ENCODE measurements at regions of chr4 and their contacts with region 1.

Region 1: GRCh38 chr4:169612871-169613859 is 782 bp upstream of the NEK1 start:
- DNase-seq: peak; percentile 81
- H3K4me3 Mint-ChIP-seq: peak overlapping the region; percentile 98
- H3K27ac Mint-ChIP-seq: peak overlapping the region; percentile 98
- H3K4me1 Mint-ChIP-seq: peaks cover 12% of the 10 kb centered on the region
- H3K27me3 Mint-ChIP-seq: no peaks in the 10 kb centered on the region
- CTCF ChIP-seq: peak; percentile 56

Region 2: DNA sequence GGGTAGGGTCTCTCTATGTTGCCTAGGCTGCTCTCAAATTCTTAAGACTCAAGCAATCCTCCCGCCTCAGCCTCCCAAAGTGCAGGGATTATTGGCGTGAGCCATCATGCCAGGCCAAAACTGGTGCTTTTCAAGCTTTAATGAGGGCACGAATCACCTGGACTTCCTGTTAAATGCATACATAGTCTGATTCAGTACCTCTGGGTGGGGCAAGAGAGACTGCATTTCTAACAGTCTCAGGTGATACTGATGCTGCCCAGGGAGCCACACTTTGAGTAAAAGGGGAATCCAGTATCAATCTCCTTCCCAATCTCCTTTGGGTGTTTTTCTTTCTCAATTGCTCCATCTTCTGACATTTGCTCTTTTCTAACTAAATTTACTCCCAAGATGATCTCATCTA is 438.9 kb before region 1 on chr4:
- CTCF ChIA-PET with region 1: no interaction called
- POLR2A ChIA-PET with region 1: no interaction called
- intact Hi-C with region 1: no loop called
- DNase-seq: no peak
- H3K4me3 Mint-ChIP-seq: no peak overlapping the region
- H3K27ac Mint-ChIP-seq: no peak overlapping the region
- H3K4me1 Mint-ChIP-seq: no peaks in the 10 kb centered on the region
- H3K27me3 Mint-ChIP-seq: no peaks in the 10 kb centered on the region
- CTCF ChIP-seq: no peak

Region 3: GRCh38 chr4:169723207-169723965 is 110.2 kb after region 1 on chr4:
- CTCF ChIA-PET with region 1: no interaction called
- POLR2A ChIA-PET with region 1: interaction called, 3 read pairs
- intact Hi-C with region 1: loop called (anchors 5 kb)
- DNase-seq: peak; percentile 11
- H3K4me3 Mint-ChIP-seq: no peak overlapping the region
- H3K27ac Mint-ChIP-seq: no peak overlapping the region
- H3K4me1 Mint-ChIP-seq: no peaks in the 10 kb centered on the region
- H3K27me3 Mint-ChIP-seq: no peaks in the 10 kb centered on the region
- CTCF ChIP-seq: no peak

Region 4: GRCh38 chr4:169791527-169792156 is 178.5 kb after region 1 on chr4:
- CTCF ChIA-PET with region 1: interaction called, 3 read pairs
- POLR2A ChIA-PET with region 1: no interaction called
- intact Hi-C with region 1: loop called (anchors 2 kb)
- DNase-seq: peak; percentile 65
- H3K4me3 Mint-ChIP-seq: peak overlapping the region; percentile 1
- H3K27ac Mint-ChIP-seq: peak overlapping the region; percentile 10
- H3K4me1 Mint-ChIP-seq: peaks cover 27% of the 10 kb centered on the region
- H3K27me3 Mint-ChIP-seq: peaks cover 31% of the 10 kb centered on the region
- CTCF ChIP-seq: peak; percentile 41

Region 5: DNA sequence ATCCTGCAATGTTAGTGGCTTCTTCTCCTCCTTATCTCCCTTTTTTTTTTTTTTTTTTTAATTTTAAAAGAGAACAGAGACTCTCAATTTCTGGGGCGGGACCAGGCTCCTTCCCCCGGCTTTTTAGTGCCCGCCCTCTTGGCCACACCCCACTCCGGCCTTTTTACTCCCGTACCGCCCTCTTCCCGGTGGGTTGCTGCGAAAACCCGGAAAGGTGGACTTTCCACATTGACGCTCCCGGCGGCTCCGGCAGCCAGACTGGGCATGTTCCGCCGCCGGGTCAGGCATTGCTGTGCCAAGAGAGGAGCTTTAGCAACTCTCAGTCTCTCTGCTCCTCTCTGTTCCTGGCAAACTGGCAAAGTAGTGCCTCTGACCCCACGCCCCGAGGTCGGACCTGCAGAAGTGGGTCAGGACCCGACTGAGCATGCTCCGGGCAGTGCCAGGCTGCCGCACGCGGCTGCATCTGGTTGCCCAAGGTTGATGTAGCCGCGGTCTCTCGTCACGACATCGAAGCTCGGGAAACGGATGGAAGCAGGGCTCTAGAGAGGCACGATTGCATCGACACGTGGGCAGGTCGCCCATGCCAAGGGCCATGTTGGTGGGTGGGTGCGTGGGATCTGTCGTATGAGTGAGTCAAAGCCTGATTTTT is 414.1 kb after region 1 on chr4:
- CTCF ChIA-PET with region 1: no interaction called
- POLR2A ChIA-PET with region 1: interaction called, 15 read pairs
- intact Hi-C with region 1: loop called (anchors 1 kb)
- DNase-seq: peak; percentile 96
- H3K4me3 Mint-ChIP-seq: peak overlapping the region; percentile 93
- H3K27ac Mint-ChIP-seq: peak overlapping the region; percentile 96
- H3K4me1 Mint-ChIP-seq: peaks cover 12% of the 10 kb centered on the region
- H3K27me3 Mint-ChIP-seq: no peaks in the 10 kb centered on the region
- CTCF ChIP-seq: no peak

Region 6: DNA sequence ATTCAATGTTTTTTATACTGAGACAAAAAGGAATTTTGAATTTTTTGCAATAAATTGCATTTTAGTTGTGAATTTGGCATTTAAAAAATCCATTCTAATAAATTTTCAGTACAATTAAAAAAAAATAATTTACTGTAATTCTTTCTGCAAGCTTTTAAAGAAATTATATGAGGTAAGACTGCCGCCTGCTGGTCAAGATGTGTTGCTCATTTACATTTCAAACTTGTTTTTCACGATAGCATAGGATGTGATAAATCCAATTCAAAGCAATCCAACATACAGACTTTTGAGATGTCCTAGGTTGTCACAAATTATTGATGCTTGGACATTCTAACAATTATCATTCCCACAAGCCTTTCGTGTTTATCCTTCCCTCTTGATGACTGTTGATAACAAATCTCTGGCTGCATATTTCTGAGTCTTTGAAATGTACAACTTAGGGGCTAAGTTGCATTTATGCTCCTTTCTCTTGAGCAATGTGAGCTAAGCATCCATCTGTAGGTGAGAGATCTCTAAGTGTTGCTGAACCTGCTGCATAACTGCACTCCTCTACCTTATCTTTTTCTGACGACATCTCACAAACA is 434.7 kb after region 1 on chr4:
- CTCF ChIA-PET with region 1: interaction called, 6 read pairs
- POLR2A ChIA-PET with region 1: interaction called, 6 read pairs
- intact Hi-C with region 1: loop called (anchors 1 kb)
- DNase-seq: peak; percentile 62
- H3K4me3 Mint-ChIP-seq: no peak overlapping the region
- H3K27ac Mint-ChIP-seq: no peak overlapping the region
- H3K4me1 Mint-ChIP-seq: no peaks in the 10 kb centered on the region
- H3K27me3 Mint-ChIP-seq: no peaks in the 10 kb centered on the region
- CTCF ChIP-seq: peak; percentile 69

Region 7: DNA sequence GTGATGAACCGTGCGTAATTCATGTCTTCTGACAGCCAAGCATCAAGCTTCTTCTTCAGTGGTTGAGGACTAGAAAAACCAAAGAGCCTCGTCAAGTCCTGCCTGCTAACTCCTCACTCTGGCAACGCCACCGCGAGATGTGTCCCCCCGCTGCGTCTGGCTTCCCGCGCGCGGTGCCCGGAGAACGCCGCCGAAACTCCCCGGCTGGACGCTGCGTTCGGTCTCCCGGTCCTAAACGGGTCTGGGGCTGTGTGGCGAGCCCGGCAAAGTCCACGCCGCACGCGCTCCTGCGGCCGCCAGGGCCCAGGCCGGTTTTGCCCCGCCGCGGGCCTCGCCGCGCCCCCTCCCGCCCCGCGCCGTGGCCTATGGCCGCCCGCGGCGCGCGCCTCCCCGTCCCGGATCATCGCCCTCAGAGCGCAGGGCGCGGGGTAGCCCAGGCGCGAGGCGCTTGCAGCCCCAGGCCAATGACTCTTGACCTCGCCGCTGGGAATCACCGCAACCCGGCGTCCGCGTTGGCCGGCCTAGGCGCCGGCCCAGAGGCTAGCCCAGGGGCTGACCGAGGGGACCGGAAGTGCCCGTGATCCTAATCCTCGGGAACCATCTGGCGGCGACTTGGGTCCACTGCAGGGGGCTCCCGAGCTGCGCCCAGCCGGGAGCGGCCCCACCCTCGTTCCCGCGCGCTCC is 476.6 kb after region 1 on chr4 and contains the start of gene AADAT:
- CTCF ChIA-PET with region 1: interaction called, 4 read pairs
- POLR2A ChIA-PET with region 1: no interaction called
- intact Hi-C with region 1: loop called (anchors 2 kb)
- DNase-seq: peak; percentile 81
- H3K4me3 Mint-ChIP-seq: peak within 1 kb of the TSS; percentile 81
- H3K27ac Mint-ChIP-seq: peak within 1 kb of the TSS; percentile 61
- H3K4me1 Mint-ChIP-seq: peaks cover 6% of the 10 kb centered on the region
- H3K27me3 Mint-ChIP-seq: no peaks in the 10 kb centered on the region
- CTCF ChIP-seq: peak; percentile 86
- total RNA-seq, gene AADAT: 6.4 and 6.9 TPM in 2 replicates